ENCODE measurements at regions of chr11 and their contacts with region 1.

Region 1: DNA sequence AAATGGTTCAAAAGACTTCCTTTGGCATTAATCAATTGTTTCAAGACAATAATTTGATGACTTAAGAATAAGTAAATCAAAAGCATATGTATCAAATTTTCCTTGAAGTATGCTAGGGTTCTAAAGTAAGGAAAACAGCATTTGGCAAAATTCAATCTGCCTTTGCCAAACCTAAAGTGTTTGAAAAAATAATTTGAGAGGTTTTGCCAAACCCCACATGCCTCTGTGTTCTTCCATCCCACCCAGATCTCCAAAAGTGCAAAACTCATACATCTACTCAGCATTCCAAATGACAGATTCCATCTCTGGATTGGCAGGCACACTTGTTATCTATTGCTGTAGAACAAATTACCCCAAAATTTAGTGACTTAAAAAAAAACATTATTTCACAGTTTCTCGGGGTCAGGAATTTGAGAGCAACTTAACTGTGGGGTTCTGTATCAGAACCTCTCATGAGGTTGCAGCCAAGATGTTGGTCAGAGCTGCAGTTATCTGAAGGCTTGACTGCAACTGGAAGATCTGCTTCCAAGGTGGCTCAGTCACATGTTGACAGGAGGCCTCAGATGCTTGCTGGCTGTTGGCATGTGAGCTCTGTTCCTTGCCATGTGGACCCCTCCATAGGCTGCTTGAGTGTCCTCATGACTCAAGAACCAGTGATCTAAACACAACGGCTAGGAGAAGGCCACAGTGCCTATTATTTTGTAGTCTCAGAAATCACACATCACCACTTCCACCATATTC is 100.6 kb upstream of the ARHGAP42 start:
- DNase-seq: no peak
- ATAC-seq: no peak
- H3K4me3 ChIP-seq: no peak overlapping the region
- H3K4me3 Mint-ChIP-seq: no peak overlapping the region
- H3K27ac ChIP-seq: no peak overlapping the region
- H3K27ac Mint-ChIP-seq: no peak overlapping the region
- H3K4me1 ChIP-seq: no peaks in the 10 kb centered on the region
- H3K4me1 Mint-ChIP-seq: no peaks in the 10 kb centered on the region
- H3K27me3 ChIP-seq: no peaks in the 10 kb centered on the region
- H3K27me3 Mint-ChIP-seq: no peaks in the 10 kb centered on the region
- CTCF ChIP-seq: no peak

Region 2: GRCh38 chr11:100546714-100547113 is 39.8 kb before region 1 on chr11:
- CTCF ChIA-PET with region 1: no interaction called
- POLR2A ChIA-PET with region 1: no interaction called
- intact Hi-C with region 1: loop called in 1 of 2 experiments (anchors 1 kb)
- DNase-seq: no peak
- ATAC-seq: no peak
- H3K4me3 ChIP-seq: no peak overlapping the region
- H3K4me3 Mint-ChIP-seq: no peak overlapping the region
- H3K27ac ChIP-seq: no peak overlapping the region
- H3K27ac Mint-ChIP-seq: no peak overlapping the region
- H3K4me1 ChIP-seq: no peaks in the 10 kb centered on the region
- H3K4me1 Mint-ChIP-seq: no peaks in the 10 kb centered on the region
- H3K27me3 ChIP-seq: no peaks in the 10 kb centered on the region
- H3K27me3 Mint-ChIP-seq: peaks cover 2% of the 10 kb centered on the region
- CTCF ChIP-seq: no peak

Region 3: DNA sequence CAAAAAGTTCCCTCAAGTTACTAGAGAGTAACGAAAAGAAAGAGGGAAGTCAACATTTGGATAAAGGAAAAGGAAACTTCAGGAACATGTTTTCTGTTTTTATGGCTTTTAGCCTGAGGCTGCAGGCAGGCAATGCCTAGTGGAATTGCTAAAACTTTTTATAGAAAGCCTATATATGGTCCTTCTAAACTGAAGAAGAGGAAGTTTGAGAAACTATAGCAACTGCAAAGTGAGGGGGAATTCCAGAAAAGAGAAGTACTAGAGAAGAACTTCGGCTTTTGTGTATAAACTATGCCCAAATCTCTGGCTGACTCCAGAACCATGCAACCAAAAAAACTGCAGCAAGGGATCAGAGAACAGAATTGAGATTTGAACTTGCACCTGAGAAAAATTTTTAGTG is 26.2 kb after region 1 on chr11:
- CTCF ChIA-PET with region 1: no interaction called
- POLR2A ChIA-PET with region 1: no interaction called
- intact Hi-C with region 1: no loop called
- DNase-seq: no peak
- ATAC-seq: no peak
- H3K4me3 ChIP-seq: no peak overlapping the region
- H3K4me3 Mint-ChIP-seq: no peak overlapping the region
- H3K27ac ChIP-seq: no peak overlapping the region
- H3K27ac Mint-ChIP-seq: no peak overlapping the region
- H3K4me1 ChIP-seq: no peaks in the 10 kb centered on the region
- H3K4me1 Mint-ChIP-seq: no peaks in the 10 kb centered on the region
- H3K27me3 ChIP-seq: no peaks in the 10 kb centered on the region
- H3K27me3 Mint-ChIP-seq: no peaks in the 10 kb centered on the region
- CTCF ChIP-seq: no peak

Region 4: DNA sequence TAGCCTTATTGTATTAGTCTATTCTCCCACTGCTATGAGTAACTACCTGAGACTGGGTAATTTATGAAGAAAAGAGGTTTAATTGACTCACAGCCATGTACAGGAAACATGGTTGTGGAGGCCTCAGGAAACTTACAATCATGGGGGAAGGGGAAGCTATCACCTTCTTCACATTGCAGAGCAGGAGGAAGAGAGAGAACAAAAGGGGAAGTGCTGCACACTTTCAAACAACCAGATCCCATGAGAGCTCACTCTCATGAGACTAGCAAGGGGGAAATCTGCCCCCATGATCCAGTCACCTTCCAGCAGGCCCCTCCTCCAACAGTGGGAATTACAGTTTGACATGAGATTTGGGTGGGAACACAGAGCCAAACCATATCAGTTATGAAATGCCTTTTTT is 279.9 kb after region 1 on chr11:
- CTCF ChIA-PET with region 1: no interaction called
- POLR2A ChIA-PET with region 1: no interaction called
- intact Hi-C with region 1: no loop called
- DNase-seq: no peak
- ATAC-seq: no peak
- H3K4me3 ChIP-seq: no peak overlapping the region
- H3K4me3 Mint-ChIP-seq: no peak overlapping the region
- H3K27ac ChIP-seq: no peak overlapping the region
- H3K27ac Mint-ChIP-seq: no peak overlapping the region
- H3K4me1 ChIP-seq: no peaks in the 10 kb centered on the region
- H3K4me1 Mint-ChIP-seq: no peaks in the 10 kb centered on the region
- H3K27me3 ChIP-seq: no peaks in the 10 kb centered on the region
- H3K27me3 Mint-ChIP-seq: no peaks in the 10 kb centered on the region
- CTCF ChIP-seq: no peak